ENCODE measurements at regions of chr15 and their contacts with region 1.

Region 1: DNA sequence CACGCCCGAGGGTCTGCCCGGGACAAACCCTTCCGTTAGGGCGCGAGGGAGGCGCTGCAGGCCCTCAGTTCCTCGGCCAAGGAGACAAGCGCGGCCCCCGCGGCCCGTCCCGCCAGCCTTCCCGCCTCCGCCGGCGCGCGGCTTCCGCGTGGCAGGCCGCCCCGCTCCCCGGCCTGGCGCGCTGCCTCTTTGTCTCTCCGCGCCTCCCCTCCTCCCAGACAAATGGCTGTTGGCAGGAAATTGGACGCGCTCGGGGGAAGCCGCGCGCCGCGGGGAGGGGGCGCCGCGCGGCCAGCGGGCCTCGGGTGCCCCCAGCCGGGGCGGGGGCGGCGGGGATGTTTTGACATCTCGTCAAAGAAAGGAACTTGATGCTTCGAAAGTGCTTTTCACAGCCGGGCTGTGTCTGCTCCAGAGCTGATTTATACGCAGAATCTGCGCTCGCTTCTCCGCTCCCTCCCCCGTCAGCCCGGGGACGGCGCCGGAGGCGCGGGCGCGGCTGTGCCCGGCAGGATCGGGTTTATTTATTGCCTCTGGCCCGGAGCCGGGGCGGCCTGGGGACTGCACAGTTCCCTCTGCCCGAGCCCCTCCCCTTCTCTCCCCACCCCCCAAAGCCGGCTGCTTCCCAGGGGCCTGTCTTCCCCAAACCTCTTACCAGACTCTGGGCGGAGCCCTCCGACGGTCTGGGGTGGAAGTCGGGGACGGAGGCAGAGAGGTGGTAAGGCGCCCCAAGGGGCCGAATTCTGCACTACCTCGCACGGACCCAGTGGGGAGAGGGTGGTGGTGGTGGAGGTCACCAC is 20.7 kb downstream of the SHF start:
- DNase-seq: peak; percentile 90
- ATAC-seq: peak; percentile 81
- H3K4me3 Mint-ChIP-seq: peak overlapping the region; percentile 57
- H3K27ac Mint-ChIP-seq: no peak overlapping the region
- H3K4me1 Mint-ChIP-seq: peaks cover 54% of the 10 kb centered on the region
- H3K27me3 Mint-ChIP-seq: peaks cover 1% of the 10 kb centered on the region
- CTCF ChIP-seq: peak; percentile 53

Region 2: DNA sequence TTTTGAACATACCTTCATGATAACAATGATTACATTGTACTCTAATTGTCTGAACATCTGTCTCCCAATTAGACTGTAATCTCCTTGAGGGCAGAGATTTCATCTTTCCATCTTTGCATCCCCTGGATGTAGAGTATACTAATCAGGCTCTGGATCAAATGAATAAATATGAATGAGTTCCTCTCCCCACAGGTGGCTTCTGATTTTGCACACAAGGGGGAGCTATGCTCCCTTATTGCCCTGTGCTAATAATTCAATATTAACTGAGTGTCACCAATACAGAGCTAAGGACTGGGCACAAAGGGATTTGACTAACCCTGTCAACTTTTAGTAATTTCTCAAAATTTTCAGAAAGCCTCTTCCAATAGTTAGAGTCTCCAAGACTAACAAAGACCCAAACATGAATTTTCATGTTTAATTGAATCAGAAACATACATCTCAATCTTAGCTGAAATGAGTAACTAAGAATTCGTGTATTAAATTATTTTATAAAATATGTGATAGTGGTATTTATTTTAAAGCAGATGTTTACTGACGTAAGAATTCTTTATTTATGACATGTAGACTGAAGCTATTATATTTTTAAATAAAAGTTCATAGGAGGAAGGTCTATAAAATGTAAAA is 40.4 kb before region 1 on chr15:
- CTCF ChIA-PET with region 1: interaction called, 21 read pairs
- POLR2A ChIA-PET with region 1: no interaction called
- DNase-seq: no peak
- ATAC-seq: no peak
- H3K4me3 Mint-ChIP-seq: no peak overlapping the region
- H3K27ac Mint-ChIP-seq: no peak overlapping the region
- H3K4me1 Mint-ChIP-seq: peaks cover 5% of the 10 kb centered on the region
- H3K27me3 Mint-ChIP-seq: peaks cover 99% of the 10 kb centered on the region
- CTCF ChIP-seq: no peak

Region 3: DNA sequence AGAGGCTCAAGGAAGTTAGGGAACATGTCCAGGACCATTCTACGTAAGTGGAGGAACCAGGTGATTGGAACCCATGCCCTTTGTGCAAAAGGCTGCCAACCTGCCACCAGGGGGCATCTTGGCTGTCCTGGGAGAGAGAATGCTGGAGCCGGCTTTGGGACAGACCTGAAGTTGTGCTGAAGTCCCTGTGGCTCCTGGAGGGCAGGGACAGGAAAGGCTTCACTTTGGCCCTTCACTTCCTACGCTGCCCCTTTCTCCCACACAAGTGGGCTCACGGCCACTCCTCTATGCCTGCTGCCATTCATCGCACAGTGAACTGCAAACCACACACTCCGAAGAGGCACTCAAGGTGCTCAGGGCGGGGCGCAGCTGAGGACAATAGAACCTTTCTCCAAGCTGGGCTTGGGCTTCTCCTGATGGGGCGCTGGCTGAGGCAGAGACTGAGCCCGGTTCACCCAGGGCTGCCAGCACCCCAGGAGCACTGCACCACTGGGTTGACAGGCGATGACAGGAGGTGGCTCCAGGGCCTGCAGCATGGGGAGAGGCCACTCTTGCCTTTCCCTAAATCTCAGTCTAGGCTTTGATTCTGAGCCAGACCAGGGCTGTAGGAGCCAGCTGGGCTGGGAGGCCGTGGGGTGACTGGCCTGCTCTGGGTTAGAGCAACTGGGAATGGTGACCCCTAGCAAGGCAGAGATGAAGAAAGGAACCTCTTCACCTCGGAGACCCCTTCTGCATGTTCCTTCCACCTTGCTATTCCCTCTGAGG is 12.4 kb after region 1 on chr15:
- CTCF ChIA-PET with region 1: interaction called, 34 read pairs
- POLR2A ChIA-PET with region 1: interaction called, 6 read pairs
- DNase-seq: peak; percentile 72
- ATAC-seq: peak; percentile 70
- H3K4me3 Mint-ChIP-seq: no peak overlapping the region
- H3K27ac Mint-ChIP-seq: no peak overlapping the region
- H3K4me1 Mint-ChIP-seq: peaks cover 41% of the 10 kb centered on the region
- H3K27me3 Mint-ChIP-seq: no peaks in the 10 kb centered on the region; the same call in 1 of the 2 replicates
- CTCF ChIP-seq: peak; percentile 61; the same call in 1 of the 2 replicates

Region 4: GRCh38 chr15:45205192-45205591 is 38.2 kb after region 1 on chr15:
- CTCF ChIA-PET with region 1: interaction called, 156 read pairs
- POLR2A ChIA-PET with region 1: interaction called, 6 read pairs
- DNase-seq: peak; percentile 77
- ATAC-seq: peak; percentile 52
- H3K4me3 Mint-ChIP-seq: no peak overlapping the region
- H3K27ac Mint-ChIP-seq: no peak overlapping the region
- H3K4me1 Mint-ChIP-seq: no peaks in the 10 kb centered on the region
- H3K27me3 Mint-ChIP-seq: peaks cover 19% of the 10 kb centered on the region
- CTCF ChIP-seq: peak; percentile 65

Region 5: GRCh38 chr15:45314960-45315359 is 147.9 kb after region 1 on chr15:
- CTCF ChIA-PET with region 1: interaction called, 12 read pairs
- POLR2A ChIA-PET with region 1: no interaction called
- DNase-seq: peak; percentile 59
- ATAC-seq: peak; percentile 79
- H3K4me3 Mint-ChIP-seq: no peak overlapping the region
- H3K27ac Mint-ChIP-seq: no peak overlapping the region
- H3K4me1 Mint-ChIP-seq: no peaks in the 10 kb centered on the region
- H3K27me3 Mint-ChIP-seq: peaks cover 14% of the 10 kb centered on the region
- CTCF ChIP-seq: no peak